ENCODE measurements at regions of chrX and their contacts with region 1.

Region 1: DNA sequence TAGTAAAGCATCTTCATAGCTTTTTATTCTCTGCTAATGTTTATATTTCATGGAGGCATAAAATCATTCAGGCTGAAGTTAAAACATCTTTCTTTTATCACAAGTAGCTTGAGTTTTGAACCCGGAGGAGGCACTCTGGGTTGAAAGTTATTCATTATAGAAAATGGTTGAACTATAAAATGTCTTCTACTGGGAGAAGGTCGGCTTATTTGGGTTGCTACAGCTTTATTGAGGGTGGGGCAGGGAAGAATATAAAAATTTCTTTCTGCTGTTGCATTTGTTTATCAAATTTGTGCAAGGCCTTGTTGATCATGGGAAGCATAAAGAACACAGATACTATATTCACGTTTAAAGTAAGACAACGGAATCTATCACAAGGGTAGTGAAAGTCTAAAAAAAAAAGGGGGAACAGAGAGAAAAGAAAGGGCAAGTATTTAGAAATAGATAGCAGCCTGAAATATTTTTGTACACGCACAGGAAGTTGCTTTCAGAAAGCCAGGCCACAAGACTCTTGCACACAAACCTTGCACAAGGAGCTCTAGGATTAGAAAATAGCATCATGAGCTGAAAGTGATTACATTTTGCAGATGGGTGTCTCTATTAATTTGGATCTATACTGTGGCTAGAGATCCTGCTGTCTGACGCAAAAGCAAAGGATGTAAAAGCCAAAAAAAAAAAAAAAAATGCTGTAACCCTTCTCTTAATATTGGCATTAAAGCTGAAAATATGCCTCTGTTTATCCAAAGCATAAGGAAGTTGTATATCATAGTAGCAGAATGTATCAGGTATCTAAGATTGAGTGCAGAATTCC is 37.2 kb upstream of the FAM9C start:
- DNase-seq: no peak
- ATAC-seq: peak; percentile 27
- H3K4me3 Mint-ChIP-seq: peak overlapping the region; percentile 63
- H3K27ac Mint-ChIP-seq: peak overlapping the region; percentile 95
- H3K4me1 Mint-ChIP-seq: peaks cover 90% of the 10 kb centered on the region
- H3K27me3 Mint-ChIP-seq: no peaks in the 10 kb centered on the region

Region 2: GRCh38 chrX:13013363-13014110 is 68.1 kb before region 1 on chrX:
- CTCF ChIA-PET with region 1: interaction called, 11 read pairs
- POLR2A ChIA-PET with region 1: interaction called, 11 read pairs
- DNase-seq: no peak
- ATAC-seq: peak; percentile 71
- H3K4me3 Mint-ChIP-seq: peak overlapping the region; percentile 30
- H3K27ac Mint-ChIP-seq: peak overlapping the region; percentile 75
- H3K4me1 Mint-ChIP-seq: peaks cover 50% of the 10 kb centered on the region
- H3K27me3 Mint-ChIP-seq: no peaks in the 10 kb centered on the region